ENCODE measurements at regions of chr16 and their contacts with region 1.

Region 1: GRCh38 chr16:16007743-16008111 is 58.3 kb downstream of the ABCC1 start:
- DNase-seq: no peak
- ATAC-seq: no peak; the same call in 2 of the 3 replicates
- H3K4me3 ChIP-seq: no peak overlapping the region
- H3K27ac ChIP-seq: peak overlapping the region; percentile 52; the same call in 1 of the 3 replicates
- H3K4me1 ChIP-seq: peaks cover 10 to 11% of the 10 kb centered on the region in 2 experiments
- H3K27me3 ChIP-seq: no peaks in the 10 kb centered on the region
- CTCF ChIP-seq: no peak
- EP300 ChIP-seq: no peak
- POLR2A ChIP-seq: no peak
- RAD21 ChIP-seq: no peak

Region 2: GRCh38 chr16:15996432-15997109 is 11.2 kb before region 1 on chr16:
- CTCF ChIA-PET with region 1: no interaction called
- POLR2A ChIA-PET with region 1: interaction called, 11 read pairs
- in situ Hi-C with region 1: no loop called
- intact Hi-C with region 1: no loop called
- DNase-seq: peak; percentile 32 to 50 (median 44)
- ATAC-seq: peak; percentile 9; the same call in 2 of the 3 replicates
- H3K4me3 ChIP-seq: no peak overlapping the region
- H3K27ac ChIP-seq: peak overlapping the region; percentile 23; the same call in 2 of the 3 replicates
- H3K4me1 ChIP-seq: peaks cover 25 to 43% of the 10 kb centered on the region in 2 experiments
- H3K27me3 ChIP-seq: no peaks in the 10 kb centered on the region
- CTCF ChIP-seq: no peak
- EP300 ChIP-seq: no peak
- POLR2A ChIP-seq: no peak
- RAD21 ChIP-seq: no peak; a peak in 1 of 4 replicates

Measured in K562 (cell line).